ENCODE measurements at regions of chrX and their contacts with region 1.

Region 1: GRCh38 chrX:135086197-135086854 is 34.0 kb downstream of the ETDB start:
- DNase-seq: peak; percentile 46
- ATAC-seq: peak; percentile 98
- H3K4me3 Mint-ChIP-seq: no peak overlapping the region
- H3K27ac Mint-ChIP-seq: peak overlapping the region; percentile 67
- H3K4me1 Mint-ChIP-seq: peaks cover 6% of the 10 kb centered on the region
- H3K27me3 Mint-ChIP-seq: no peaks in the 10 kb centered on the region

Region 2: GRCh38 chrX:134880866-134881265 is 205.5 kb before region 1 on chrX:
- CTCF ChIA-PET with region 1: no interaction called
- POLR2A ChIA-PET with region 1: no interaction called
- intact Hi-C with region 1: no loop called
- DNase-seq: no peak
- ATAC-seq: no peak
- H3K4me3 Mint-ChIP-seq: no peak overlapping the region
- H3K27ac Mint-ChIP-seq: no peak overlapping the region
- H3K4me1 Mint-ChIP-seq: no peaks in the 10 kb centered on the region
- H3K27me3 Mint-ChIP-seq: no peaks in the 10 kb centered on the region

Region 3: DNA sequence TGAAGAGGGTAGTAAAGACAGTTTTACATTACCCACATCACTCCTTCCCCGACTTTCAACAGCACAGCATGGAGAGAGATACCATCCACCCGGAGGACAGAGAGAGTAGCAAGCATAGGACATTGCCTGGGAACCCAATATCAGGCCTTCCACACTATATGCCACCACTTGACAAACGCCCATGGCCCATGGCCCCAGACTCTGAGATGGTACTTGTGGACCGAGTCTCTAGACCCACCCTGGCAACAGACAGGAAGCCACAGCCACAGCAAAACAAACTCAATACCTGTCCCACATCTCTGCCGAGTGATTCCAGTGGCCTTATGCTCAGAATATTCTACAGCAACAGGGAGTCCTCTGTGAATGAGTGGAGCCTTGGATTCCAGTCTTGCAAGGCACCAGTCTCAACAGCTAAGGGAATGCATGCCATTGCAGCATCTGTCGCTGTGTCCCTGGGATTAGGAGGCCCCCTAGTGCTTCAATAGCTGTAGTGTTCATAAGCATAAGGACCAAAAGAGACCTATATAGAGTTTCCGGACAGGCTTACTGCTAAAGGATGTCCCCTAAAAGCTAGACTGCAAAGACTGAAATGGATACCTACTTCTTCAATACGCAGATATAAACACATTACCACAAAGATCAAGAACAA is 99.6 kb after region 1 on chrX:
- CTCF ChIA-PET with region 1: no interaction called
- POLR2A ChIA-PET with region 1: no interaction called
- intact Hi-C with region 1: loop called in 1 of 2 experiments (anchors 5 kb)
- DNase-seq: peak; percentile 46
- ATAC-seq: peak; percentile 83
- H3K4me3 Mint-ChIP-seq: no peak overlapping the region
- H3K27ac Mint-ChIP-seq: no peak overlapping the region
- H3K4me1 Mint-ChIP-seq: no peaks in the 10 kb centered on the region
- H3K27me3 Mint-ChIP-seq: peaks cover 20% of the 10 kb centered on the region

Region 4: DNA sequence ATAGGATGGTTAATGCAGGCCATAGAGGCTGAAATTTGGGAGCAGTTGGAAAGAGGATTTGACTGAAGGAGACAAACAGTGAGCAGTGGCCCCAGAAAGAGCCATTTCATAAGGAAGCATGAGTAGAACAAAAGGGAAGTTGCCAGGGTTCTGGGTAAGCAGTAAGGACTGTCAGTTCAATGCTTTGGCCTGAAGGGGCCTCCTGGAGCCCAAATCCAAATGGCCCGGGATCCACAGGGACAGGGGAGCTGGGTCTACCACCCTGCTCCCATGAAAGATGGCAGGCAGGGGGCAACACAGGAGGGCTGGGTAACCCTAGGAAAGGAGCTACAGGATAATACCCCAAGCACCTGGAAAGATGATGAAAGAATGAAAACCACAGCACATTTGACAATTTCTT is 430.1 kb after region 1 on chrX:
- CTCF ChIA-PET with region 1: no interaction called
- POLR2A ChIA-PET with region 1: no interaction called
- intact Hi-C with region 1: no loop called
- DNase-seq: peak; percentile 8
- ATAC-seq: no peak
- H3K4me3 Mint-ChIP-seq: no peak overlapping the region
- H3K27ac Mint-ChIP-seq: no peak overlapping the region
- H3K4me1 Mint-ChIP-seq: peaks cover 12% of the 10 kb centered on the region
- H3K27me3 Mint-ChIP-seq: no peaks in the 10 kb centered on the region

Measured in activated CD4-positive, alpha-beta T cell treated with anti-CD3 and anti-CD28 coated beads for 36 hours (primary cell).